Gastrocnemius medialis (tissue), 4 donors: ENCODE measurements at regions of chr17 and their contacts with region 1.

Region 1: DNA sequence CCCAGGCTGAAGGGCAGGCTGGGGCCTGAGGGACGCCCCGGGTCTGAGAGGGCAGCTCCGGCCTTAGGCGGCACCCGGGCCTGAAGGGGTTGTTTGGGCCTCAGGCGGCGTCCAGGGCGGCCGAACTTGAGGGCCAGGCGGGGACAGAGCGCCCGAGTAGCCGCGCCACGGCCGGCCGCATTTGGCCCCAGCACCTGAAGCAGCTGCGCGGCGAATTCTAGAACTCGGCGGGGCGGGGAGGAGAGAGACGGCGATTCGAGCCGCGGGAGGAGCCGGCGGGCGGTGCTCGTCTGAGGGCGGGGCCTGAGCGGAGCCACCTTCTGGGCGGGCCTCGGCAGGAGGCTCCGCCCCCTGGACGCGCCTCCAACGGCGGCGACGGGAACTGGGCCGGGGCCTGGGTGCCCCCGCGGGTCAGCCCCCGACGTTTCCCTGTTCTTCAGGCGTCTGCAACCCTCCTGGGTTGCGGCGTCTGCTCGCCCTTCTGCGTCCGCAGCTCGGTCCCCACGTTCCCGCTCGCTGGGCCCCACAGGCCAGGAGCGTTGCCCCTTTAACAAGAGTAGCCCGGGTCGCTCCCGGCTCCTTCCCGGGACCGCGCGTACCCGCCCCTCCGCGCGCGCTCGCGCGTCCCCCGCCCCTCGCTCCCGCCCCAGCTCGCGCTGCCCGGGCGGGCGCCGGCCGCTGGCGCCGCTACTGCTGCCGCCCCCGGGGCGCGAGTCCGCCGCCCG is at the starts of genes INCA1 and KIF1C:
- DNase-seq: peak; percentile 93 to 94
- ATAC-seq: peak; percentile 62 to 68
- H3K4me3 ChIP-seq: peak within 1 kb of the TSS; percentile 80 to 99 (median 96)
- H3K27ac ChIP-seq: peak within 1 kb of the TSS; percentile 98 to 99 (median 99)
- H3K4me1 ChIP-seq: peaks cover 38 to 40% of the 10 kb centered on the region in 2 donors
- H3K27me3 ChIP-seq: no peaks in the 10 kb centered on the region
- CTCF ChIP-seq: peak in 2 of 5 experiments; percentile 37 to 47
- POLR2A ChIP-seq: peak; percentile 86 to 88
- total RNA-seq, gene INCA1: 1.9 to 5.7 (median 4.3) TPM
- total RNA-seq, gene KIF1C: 327 to 543 (median 393) TPM

Region 2: DNA sequence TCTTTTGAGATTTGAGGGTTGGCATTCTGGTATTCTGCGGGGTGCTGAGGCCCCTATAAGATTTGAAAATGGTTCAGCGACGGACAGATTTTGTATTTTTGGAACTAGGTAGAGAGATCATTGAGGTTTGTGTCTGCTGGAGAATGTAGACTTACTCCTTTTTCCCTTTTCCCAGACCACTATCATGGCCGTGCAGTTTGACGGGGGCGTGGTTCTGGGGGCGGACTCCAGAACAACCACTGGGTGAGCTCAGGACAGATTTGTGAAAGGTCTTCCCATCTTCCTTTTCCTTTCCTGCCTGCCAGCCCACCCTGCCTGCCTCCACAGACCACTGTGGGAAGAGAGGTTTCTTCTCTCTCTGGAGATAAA is 200.9 kb before region 1 on chr17:
- in situ Hi-C with region 1: no loop called
- intact Hi-C with region 1: loop called (anchors 2 kb)
- DNase-seq: no peak
- ATAC-seq: peak; percentile 26 to 29
- H3K4me3 ChIP-seq: peak overlapping the region; percentile 68 to 96 (median 80)
- H3K27ac ChIP-seq: peak overlapping the region; percentile 86 to 95 (median 90)
- H3K4me1 ChIP-seq: peaks cover 6 to 11% of the 10 kb centered on the region in 2 donors
- H3K27me3 ChIP-seq: no peaks in the 10 kb centered on the region
- CTCF ChIP-seq: no peak
- POLR2A ChIP-seq: no peak

Region 3: DNA sequence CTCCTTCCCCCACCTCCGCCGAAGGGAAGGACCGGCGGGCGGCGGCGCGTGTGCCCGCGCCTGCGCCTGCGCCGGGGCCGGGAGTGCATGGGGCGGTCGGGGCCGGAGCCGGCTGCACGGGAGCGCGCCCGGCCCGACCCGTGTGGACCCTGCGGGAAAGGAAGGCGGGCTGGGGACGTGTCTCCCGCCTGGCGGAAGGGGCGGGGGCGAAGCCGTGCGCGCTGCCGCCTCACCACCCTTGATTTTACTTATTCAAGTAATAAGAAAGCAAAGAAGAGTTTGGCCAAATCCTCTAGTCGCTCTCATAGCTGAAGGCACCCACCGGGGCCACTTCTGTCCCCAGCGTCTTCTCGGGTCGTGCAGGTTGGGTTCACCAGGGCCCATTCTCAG is 48.5 kb before region 1 on chr17:
- in situ Hi-C with region 1: no loop called
- intact Hi-C with region 1: loop called (anchors 1 kb)
- DNase-seq: peak; percentile 71 to 86
- ATAC-seq: peak; percentile 47 to 53
- H3K4me3 ChIP-seq: peak overlapping the region; percentile 85 to 99 (median 96)
- H3K27ac ChIP-seq: peak overlapping the region; percentile 96 to 100 (median 98)
- H3K4me1 ChIP-seq: peaks cover 58 to 64% of the 10 kb centered on the region in 2 donors
- H3K27me3 ChIP-seq: no peaks in the 10 kb centered on the region
- CTCF ChIP-seq: no peak
- POLR2A ChIP-seq: peak; percentile 15 to 78

Region 4: GRCh38 chr17:4974115-4974670 is 23.3 kb before region 1 on chr17:
- in situ Hi-C with region 1: no loop called
- intact Hi-C with region 1: loop called (anchors 1 kb)
- DNase-seq: peak; percentile 81 to 94
- ATAC-seq: peak; percentile 96
- H3K4me3 ChIP-seq: peak overlapping the region in 2 of 4 donors; percentile 11 to 14
- H3K27ac ChIP-seq: peak overlapping the region; percentile 88 to 95 (median 94)
- H3K4me1 ChIP-seq: peaks cover 27 to 42% of the 10 kb centered on the region in 2 donors
- H3K27me3 ChIP-seq: no peaks in the 10 kb centered on the region
- CTCF ChIP-seq: no peak
- POLR2A ChIP-seq: peak; percentile 80 to 83

Region 5: GRCh38 chr17:5122586-5123342 is 125.3 kb after region 1 on chr17:
- in situ Hi-C with region 1: no loop called
- intact Hi-C with region 1: loop called (anchors 5 kb)
- DNase-seq: peak in 1 of 2 donors; percentile 47
- ATAC-seq: peak; percentile 60 to 73
- H3K4me3 ChIP-seq: peak overlapping the region; percentile 65 to 78 (median 74)
- H3K27ac ChIP-seq: peak overlapping the region; percentile 86 to 92 (median 88)
- H3K4me1 ChIP-seq: peaks cover 18 to 27% of the 10 kb centered on the region in 2 donors
- H3K27me3 ChIP-seq: no peaks in the 10 kb centered on the region
- CTCF ChIP-seq: no peak
- POLR2A ChIP-seq: peak; percentile 58 to 74

Region 6: GRCh38 chr17:5155495-5155894 is 158.0 kb after region 1 on chr17:
- in situ Hi-C with region 1: no loop called
- intact Hi-C with region 1: no loop called
- DNase-seq: no peak
- ATAC-seq: no peak
- H3K4me3 ChIP-seq: no peak overlapping the region
- H3K27ac ChIP-seq: no peak overlapping the region
- H3K4me1 ChIP-seq: no peaks in the 10 kb centered on the region
- H3K27me3 ChIP-seq: no peaks in the 10 kb centered on the region
- CTCF ChIP-seq: no peak
- POLR2A ChIP-seq: no peak